CD4-positive, alpha-beta memory T cell (primary cell): ENCODE measurements at regions of chr12 and their contacts with region 1.

Region 1: GRCh38 chr12:8544295-8544694 is 3.6 kb upstream of the CLEC4E start:
- DNase-seq: peak; percentile 69 to 79 (median 72)
- H3K4me3 ChIP-seq: no peak overlapping the region
- H3K4me3 Mint-ChIP-seq: peak overlapping the region in 7 of 8 donors; percentile 37 to 59 (median 51)
- H3K27ac ChIP-seq: no peak overlapping the region
- H3K27ac Mint-ChIP-seq: no peak overlapping the region
- H3K4me1 ChIP-seq: peaks cover 6% of the 10 kb centered on the region
- H3K4me1 Mint-ChIP-seq: peaks cover 0 to 10% (median 5%) of the 10 kb centered on the region in 4 donors
- H3K27me3 ChIP-seq: no peaks in the 10 kb centered on the region
- H3K27me3 Mint-ChIP-seq: peaks cover 15 to 20% of the 10 kb centered on the region in 2 donors

Region 2: GRCh38 chr12:8554451-8555195 is 10.3 kb after region 1 on chr12:
- CTCF ChIA-PET with region 1: interaction called, 27 read pairs
- POLR2A ChIA-PET with region 1: no interaction called
- intact Hi-C with region 1: no loop called
- DNase-seq: no peak
- H3K4me3 ChIP-seq: no peak overlapping the region
- H3K4me3 Mint-ChIP-seq: no peak overlapping the region
- H3K27ac ChIP-seq: no peak overlapping the region
- H3K27ac Mint-ChIP-seq: no peak overlapping the region
- H3K4me1 ChIP-seq: no peaks in the 10 kb centered on the region
- H3K4me1 Mint-ChIP-seq: no peaks in the 10 kb centered on the region
- H3K27me3 ChIP-seq: no peaks in the 10 kb centered on the region
- H3K27me3 Mint-ChIP-seq: peaks cover 0 to 2% of the 10 kb centered on the region in 2 donors

Region 3: GRCh38 chr12:8577879-8578278 is 33.6 kb after region 1 on chr12:
- CTCF ChIA-PET with region 1: interaction called, 16 read pairs
- POLR2A ChIA-PET with region 1: no interaction called
- intact Hi-C with region 1: no loop called
- DNase-seq: no peak
- H3K4me3 ChIP-seq: no peak overlapping the region
- H3K4me3 Mint-ChIP-seq: no peak overlapping the region
- H3K27ac ChIP-seq: no peak overlapping the region
- H3K27ac Mint-ChIP-seq: no peak overlapping the region
- H3K4me1 ChIP-seq: peaks cover 6% of the 10 kb centered on the region
- H3K4me1 Mint-ChIP-seq: peaks cover 6 to 14% (median 7%) of the 10 kb centered on the region in 4 donors
- H3K27me3 ChIP-seq: no peaks in the 10 kb centered on the region
- H3K27me3 Mint-ChIP-seq: peaks cover 0 to 4% of the 10 kb centered on the region in 2 donors

Region 4: DNA sequence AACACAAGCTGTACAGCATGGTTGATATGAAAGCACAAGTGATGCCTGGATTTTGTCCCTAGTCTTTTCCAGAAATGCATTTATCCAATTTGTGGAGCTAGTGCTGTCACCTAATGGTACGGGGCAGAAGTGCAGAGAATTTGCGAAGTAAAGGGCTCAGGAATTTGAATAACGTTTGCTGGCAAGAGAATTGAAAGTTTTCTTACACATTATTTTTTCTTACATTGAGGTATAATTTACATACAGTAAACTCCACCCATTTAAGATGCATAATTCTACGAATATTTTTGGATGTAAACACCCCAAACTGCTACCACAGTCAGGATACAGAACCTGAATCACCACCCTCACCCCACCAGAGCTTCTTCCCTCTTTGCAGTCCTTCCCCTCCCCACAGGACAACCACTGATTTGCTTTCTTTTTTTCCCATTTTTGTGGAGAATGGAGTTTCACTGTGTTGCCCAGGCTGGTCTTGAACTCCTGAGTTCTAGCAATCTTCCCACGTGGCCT is 64.8 kb after region 1 on chr12:
- CTCF ChIA-PET with region 1: interaction called, 130 read pairs
- POLR2A ChIA-PET with region 1: interaction called, 10 read pairs
- intact Hi-C with region 1: loop called (anchors 1 kb)
- DNase-seq: peak in 3 of 5 donors; percentile 2 to 10 (median 6)
- H3K4me3 ChIP-seq: no peak overlapping the region
- H3K4me3 Mint-ChIP-seq: peak overlapping the region; percentile 52 to 80 (median 72)
- H3K27ac ChIP-seq: no peak overlapping the region
- H3K27ac Mint-ChIP-seq: peak overlapping the region in 3 of 7 donors; percentile 3 to 57 (median 38)
- H3K4me1 ChIP-seq: peaks cover 5% of the 10 kb centered on the region
- H3K4me1 Mint-ChIP-seq: peaks cover 10 to 21% (median 15%) of the 10 kb centered on the region in 4 donors
- H3K27me3 ChIP-seq: no peaks in the 10 kb centered on the region
- H3K27me3 Mint-ChIP-seq: peaks cover 4% of the 10 kb centered on the region in 2 donors

Region 5: DNA sequence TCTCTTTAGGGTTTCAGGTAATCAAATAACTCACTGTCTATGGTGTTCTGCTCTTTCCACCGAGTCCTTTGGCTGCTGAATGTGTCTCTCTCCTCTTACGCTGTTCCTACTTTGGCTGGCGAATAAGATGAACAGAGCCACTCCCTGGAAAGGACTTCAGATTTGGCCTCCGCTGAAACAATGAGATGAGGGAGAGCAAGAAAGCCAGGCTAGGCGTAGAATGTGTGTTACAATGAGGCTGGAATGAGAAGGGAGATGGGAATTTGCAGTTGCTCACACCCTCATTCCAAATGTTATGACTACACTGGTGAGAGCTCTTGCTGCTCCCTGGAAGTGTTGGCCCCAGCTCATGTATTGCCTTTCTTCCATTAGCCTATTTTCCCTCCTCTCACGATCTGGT is 118.3 kb after region 1 on chr12 and contains the start of gene MFAP5:
- CTCF ChIA-PET with region 1: interaction called, 45 read pairs
- POLR2A ChIA-PET with region 1: interaction called, 4 read pairs
- intact Hi-C with region 1: loop called (anchors 5 kb)
- DNase-seq: no peak
- H3K4me3 ChIP-seq: no peak within 1 kb of the TSS
- H3K4me3 Mint-ChIP-seq: no peak within 1 kb of the TSS
- H3K27ac ChIP-seq: no peak within 1 kb of the TSS
- H3K27ac Mint-ChIP-seq: no peak within 1 kb of the TSS
- H3K4me1 ChIP-seq: no peaks in the 10 kb centered on the region
- H3K4me1 Mint-ChIP-seq: no peaks in the 10 kb centered on the region
- H3K27me3 ChIP-seq: no peaks in the 10 kb centered on the region
- H3K27me3 Mint-ChIP-seq: peaks cover 5% of the 10 kb centered on the region in 2 donors
- total RNA-seq, gene MFAP5: not detected

Region 6: GRCh38 chr12:8687846-8688601 is 143.7 kb after region 1 on chr12:
- CTCF ChIA-PET with region 1: interaction called, 59 read pairs
- POLR2A ChIA-PET with region 1: no interaction called
- intact Hi-C with region 1: no loop called
- DNase-seq: peak in 1 of 5 donors; percentile 1
- H3K4me3 ChIP-seq: no peak overlapping the region
- H3K4me3 Mint-ChIP-seq: no peak overlapping the region
- H3K27ac ChIP-seq: no peak overlapping the region
- H3K27ac Mint-ChIP-seq: no peak overlapping the region
- H3K4me1 ChIP-seq: peaks cover 7% of the 10 kb centered on the region
- H3K4me1 Mint-ChIP-seq: peaks cover 0 to 7% (median 2%) of the 10 kb centered on the region in 4 donors
- H3K27me3 ChIP-seq: no peaks in the 10 kb centered on the region
- H3K27me3 Mint-ChIP-seq: peaks cover 0 to 1% of the 10 kb centered on the region in 2 donors

Region 7: GRCh38 chr12:8890313-8891085 is 346.2 kb after region 1 on chr12:
- CTCF ChIA-PET with region 1: interaction called, 47 read pairs
- POLR2A ChIA-PET with region 1: no interaction called
- intact Hi-C with region 1: loop called (anchors 1 kb)
- DNase-seq: peak; percentile 52 to 68 (median 62)
- H3K4me3 ChIP-seq: peak overlapping the region; percentile 44 to 49
- H3K4me3 Mint-ChIP-seq: peak overlapping the region; percentile 88 to 96 (median 94)
- H3K27ac ChIP-seq: peak overlapping the region; percentile 29
- H3K27ac Mint-ChIP-seq: peak overlapping the region in 6 of 7 donors; percentile 81 to 93 (median 84)
- H3K4me1 ChIP-seq: no peaks in the 10 kb centered on the region
- H3K4me1 Mint-ChIP-seq: peaks cover 0 to 6% (median 5%) of the 10 kb centered on the region in 4 donors
- H3K27me3 ChIP-seq: no peaks in the 10 kb centered on the region
- H3K27me3 Mint-ChIP-seq: no peaks in the 10 kb centered on the region